Left ventricle myocardium superior (tissue), 1 donor: ENCODE measurements at regions of chr3 and their contacts with region 1.

Region 1: GRCh38 chr3:178966299-178967176 is 105.1 kb downstream of the ZMAT3 start:
- DNase-seq: no peak
- ATAC-seq: peak; percentile 75

Region 2: GRCh38 chr3:178443634-178444033 is 522.9 kb before region 1 on chr3:
- intact Hi-C with region 1: loop called (anchors 5 kb)
- DNase-seq: no peak
- ATAC-seq: peak; percentile 27